Right ventricle myocardium superior (tissue), 1 donor: ENCODE measurements at regions of chr9 and their contacts with region 1.

Region 1: DNA sequence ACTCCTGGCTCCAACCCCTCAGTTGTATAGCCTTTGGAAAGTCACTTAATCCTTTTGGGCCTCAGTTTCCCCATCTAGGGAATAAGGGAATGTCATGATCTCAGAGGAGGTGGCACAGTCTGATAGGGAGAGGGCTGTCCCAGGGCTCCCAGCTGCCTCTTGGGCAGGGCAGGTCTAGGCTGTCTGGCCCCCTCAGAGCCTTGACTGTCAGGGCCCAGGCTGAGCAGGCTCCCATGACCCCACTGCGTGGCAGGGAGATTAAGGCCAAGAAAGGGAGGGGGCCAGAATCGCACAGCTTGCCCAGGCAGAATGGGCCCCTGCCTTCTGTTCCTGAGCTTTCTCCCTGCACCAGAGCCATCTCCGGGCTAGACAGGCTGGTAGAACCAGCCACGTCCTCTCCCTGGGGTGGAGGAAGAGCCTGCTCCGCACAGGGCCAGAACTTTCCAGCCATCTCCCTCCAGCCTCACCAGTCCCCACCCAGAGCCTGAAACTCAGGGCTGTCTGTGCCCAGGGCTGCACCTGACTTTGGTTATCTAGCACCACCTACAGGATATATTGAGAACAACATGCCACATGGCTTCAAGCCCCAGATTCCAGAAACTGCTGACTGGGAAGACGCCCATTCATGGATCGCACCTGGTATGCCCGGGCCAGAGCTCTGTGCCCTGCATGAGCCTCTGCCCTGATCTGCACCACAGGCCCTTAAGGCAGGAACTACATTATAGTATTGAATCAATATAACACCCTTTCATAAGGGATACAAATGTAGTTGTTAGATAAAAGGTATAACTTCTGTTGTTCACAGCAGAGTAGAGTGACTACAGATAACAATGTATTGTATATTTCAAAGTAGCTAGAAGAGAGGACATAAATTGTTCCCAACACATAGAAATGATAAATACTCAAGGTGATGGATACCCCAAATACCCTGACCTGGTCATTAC is 32.0 kb downstream of the NAIF1 start:
- DNase-seq: peak; percentile 65
- ATAC-seq: peak; percentile 96

Region 2: GRCh38 chr9:127943731-127944144 is 91.4 kb before region 1 on chr9:
- intact Hi-C with region 1: loop called (anchors 2 kb)
- DNase-seq: peak; percentile 92
- ATAC-seq: peak; percentile 82